Left ventricle myocardium superior (tissue), 1 donor: ENCODE measurements at regions of chr4 and their contacts with region 1.

Region 1: GRCh38 chr4:40924096-40924792 is 174.5 kb downstream of the NSUN7 start:
- DNase-seq: peak; percentile 72
- ATAC-seq: peak; percentile 44

Region 2: GRCh38 chr4:40840985-40841571 is 83.2 kb before region 1 on chr4:
- intact Hi-C with region 1: no loop called
- DNase-seq: peak; percentile 76
- ATAC-seq: peak; percentile 58

Region 3: DNA sequence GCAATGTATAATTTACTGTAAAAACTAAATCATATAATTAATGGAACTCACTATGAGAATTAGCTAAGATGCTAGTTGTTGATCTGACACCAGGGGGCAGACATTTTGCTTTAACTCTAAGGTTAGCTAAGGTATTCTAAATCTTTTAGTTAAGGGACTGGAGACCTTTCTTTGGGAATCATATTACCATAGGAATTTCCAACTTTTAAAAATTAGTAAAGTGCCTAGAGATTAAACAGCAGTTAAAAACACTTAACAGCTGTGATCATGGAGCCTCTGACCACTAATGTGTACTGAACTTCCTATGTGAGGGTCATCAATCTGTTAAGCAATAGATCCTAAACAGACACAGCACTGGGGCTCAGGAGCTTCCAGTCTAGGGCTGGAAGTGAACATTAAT is 52.1 kb after region 1 on chr4:
- intact Hi-C with region 1: loop called (anchors 10 kb)
- DNase-seq: no peak
- ATAC-seq: peak; percentile 55

Region 4: DNA sequence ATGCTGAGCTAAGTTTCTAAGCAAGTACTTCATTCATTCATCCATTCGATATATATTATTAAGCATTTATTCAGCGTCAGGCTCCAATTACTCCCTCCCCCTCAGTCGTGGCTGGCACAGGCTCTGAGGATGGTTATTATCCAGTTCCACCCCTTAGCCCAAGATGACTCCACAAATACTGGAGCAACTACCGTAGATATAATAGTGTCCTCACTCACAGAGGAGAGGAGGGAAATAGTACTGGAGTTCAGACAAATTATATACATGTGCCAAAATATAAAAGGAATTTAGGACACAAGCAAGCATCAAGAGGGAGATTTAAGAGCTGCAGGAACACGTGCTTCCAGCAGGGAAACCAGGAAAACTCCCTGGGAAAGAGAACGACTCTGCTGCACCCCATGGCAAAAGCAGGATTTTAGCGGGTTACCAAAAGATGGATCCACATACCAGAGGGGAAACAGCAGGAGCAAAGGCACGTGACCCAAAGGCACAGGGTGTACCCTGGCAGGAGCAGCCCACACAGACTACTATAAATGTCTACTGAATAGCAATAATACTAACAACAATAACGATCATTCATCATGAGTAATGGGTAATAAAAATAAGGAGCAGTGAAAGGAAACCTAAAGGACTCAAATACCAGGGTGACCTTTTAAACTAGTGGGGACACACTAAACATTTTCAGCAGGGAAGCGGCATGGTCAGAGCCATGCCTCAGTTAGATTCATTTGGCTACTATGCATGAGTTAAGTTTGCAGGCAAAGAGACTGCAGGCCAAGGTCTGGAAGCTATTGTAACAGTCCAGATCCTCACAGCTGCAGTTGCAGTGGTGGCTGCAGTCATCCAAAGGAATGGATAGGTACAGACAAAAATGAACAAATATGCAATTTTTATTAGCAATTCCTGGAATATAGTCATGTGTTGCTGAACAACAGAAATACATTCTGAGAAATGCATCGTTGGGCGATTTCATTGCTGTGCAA is 136.4 kb after region 1 on chr4:
- intact Hi-C with region 1: no loop called
- DNase-seq: no peak
- ATAC-seq: peak; percentile 60

Region 5: DNA sequence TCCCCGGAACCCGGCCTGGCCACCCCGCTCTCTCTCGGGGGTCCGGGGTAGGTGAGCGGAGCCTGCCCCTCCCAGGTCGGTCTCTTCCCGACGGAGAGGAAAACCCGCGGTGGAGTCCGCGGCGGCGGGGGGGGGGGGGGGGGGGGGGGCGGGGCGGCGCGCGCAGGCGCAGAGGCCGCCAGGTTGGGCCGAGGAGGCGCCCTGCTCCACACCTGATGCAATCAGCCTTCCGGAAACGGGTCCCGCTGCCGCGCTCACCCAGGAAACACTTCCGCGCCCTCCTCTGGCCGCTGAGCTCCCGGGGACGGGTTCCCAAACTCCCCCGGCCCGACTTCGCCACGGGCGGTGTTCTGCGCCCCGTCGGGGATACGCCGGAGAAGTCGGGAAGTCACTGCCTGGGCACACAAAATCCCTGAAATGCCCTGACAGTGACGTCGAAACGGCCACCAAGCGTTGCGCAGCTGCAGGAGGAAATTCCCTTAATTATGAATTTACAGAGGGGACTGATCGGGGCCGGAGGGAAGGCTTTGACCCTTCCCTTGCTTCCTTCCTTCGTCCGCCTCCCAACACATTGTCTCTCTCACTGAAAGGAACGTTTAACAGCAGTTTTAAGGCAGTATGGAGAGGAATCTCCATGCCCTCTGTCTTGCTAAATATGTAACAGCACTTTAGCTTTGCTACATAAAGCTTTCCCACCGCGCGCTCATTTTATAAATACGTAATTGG is 292.2 kb after region 1 on chr4:
- intact Hi-C with region 1: loop called (anchors 5 kb)
- DNase-seq: peak; percentile 77
- ATAC-seq: peak; percentile 49